HCT116 (cell line): ENCODE measurements at regions of chr2 and their contacts with region 1.

Region 1: GRCh38 chr2:32772638-32773447 is 145.0 kb downstream of the TTC27 start:
- DNase-seq: peak; percentile 21
- ATAC-seq: peak; percentile 78
- H3K4me3 ChIP-seq: no peak overlapping the region
- H3K27ac ChIP-seq: no peak overlapping the region
- H3K4me1 ChIP-seq: no peaks in the 10 kb centered on the region
- H3K27me3 ChIP-seq: no peaks in the 10 kb centered on the region
- CTCF ChIP-seq: peak; percentile 52 to 90 (median 85)
- POLR2A ChIP-seq: no peak
- RAD21 ChIP-seq: peak; percentile 93

Region 2: GRCh38 chr2:32931945-32932709 is 159.3 kb after region 1 on chr2:
- CTCF ChIA-PET with region 1: no interaction called
- POLR2A ChIA-PET with region 1: no interaction called
- RAD21 ChIA-PET with region 1: no interaction called
- intact Hi-C with region 1: loop called (anchors 5 kb)
- DNase-seq: no peak
- ATAC-seq: no peak
- H3K4me3 ChIP-seq: no peak overlapping the region
- H3K27ac ChIP-seq: no peak overlapping the region
- H3K4me1 ChIP-seq: no peaks in the 10 kb centered on the region
- H3K27me3 ChIP-seq: no peaks in the 10 kb centered on the region
- CTCF ChIP-seq: no peak
- POLR2A ChIP-seq: no peak
- RAD21 ChIP-seq: no peak

Region 3: GRCh38 chr2:33033606-33034081 is 260.8 kb after region 1 on chr2:
- CTCF ChIA-PET with region 1: interaction called, 6 read pairs
- POLR2A ChIA-PET with region 1: no interaction called
- RAD21 ChIA-PET with region 1: interaction called in 1 of 2 experiments, 3 read pairs
- intact Hi-C with region 1: loop called (anchors 1 kb)
- DNase-seq: peak; percentile 10
- ATAC-seq: peak; percentile 67
- H3K4me3 ChIP-seq: no peak overlapping the region
- H3K27ac ChIP-seq: no peak overlapping the region
- H3K4me1 ChIP-seq: no peaks in the 10 kb centered on the region
- H3K27me3 ChIP-seq: no peaks in the 10 kb centered on the region
- CTCF ChIP-seq: peak; percentile 52 to 98 (median 60)
- POLR2A ChIP-seq: no peak
- RAD21 ChIP-seq: peak; percentile 89

Region 4: DNA sequence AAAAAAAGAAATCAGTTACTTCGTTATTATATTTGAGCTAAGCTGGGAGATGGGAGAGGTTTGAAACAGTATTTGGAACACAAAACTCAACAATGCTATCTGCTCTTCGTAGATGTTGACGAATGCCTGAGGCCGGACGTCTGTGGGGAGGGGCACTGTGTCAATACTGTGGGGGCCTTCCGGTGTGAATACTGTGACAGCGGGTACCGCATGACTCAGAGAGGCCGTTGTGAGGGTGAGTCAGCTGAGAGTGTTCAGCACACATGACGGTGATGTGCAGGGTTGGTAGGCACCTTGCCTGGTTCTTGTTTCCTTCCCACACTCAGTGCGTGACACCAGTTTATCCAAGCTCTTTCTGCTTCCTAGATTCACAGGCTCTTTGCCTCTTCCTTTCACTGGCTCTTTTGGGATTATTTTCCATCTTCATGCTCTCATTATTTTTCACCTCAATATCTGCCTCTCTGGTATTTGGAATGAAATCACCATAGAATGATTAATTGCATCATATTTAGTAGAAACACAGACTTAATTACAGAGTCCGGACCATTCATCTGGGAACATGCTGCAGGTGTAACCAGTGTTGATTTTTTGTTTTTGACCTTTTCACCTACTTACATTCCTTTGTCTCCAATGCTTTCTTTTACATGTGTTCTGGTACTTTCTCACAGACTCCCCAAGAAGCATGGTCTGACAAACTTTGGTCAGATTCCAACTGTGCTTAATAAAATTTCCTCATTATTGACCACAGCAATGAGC is 503.0 kb after region 1 on chr2:
- CTCF ChIA-PET with region 1: no interaction called
- POLR2A ChIA-PET with region 1: no interaction called
- RAD21 ChIA-PET with region 1: no interaction called
- intact Hi-C with region 1: loop called (anchors 5 kb)
- DNase-seq: peak; percentile 6
- ATAC-seq: peak; percentile 76
- H3K4me3 ChIP-seq: no peak overlapping the region
- H3K27ac ChIP-seq: no peak overlapping the region
- H3K4me1 ChIP-seq: peaks cover 0 to 7% of the 10 kb centered on the region in 2 experiments; a peak in 2 of 4 replicates
- H3K27me3 ChIP-seq: no peaks in the 10 kb centered on the region
- CTCF ChIP-seq: no peak
- POLR2A ChIP-seq: no peak
- RAD21 ChIP-seq: no peak

Region 5: DNA sequence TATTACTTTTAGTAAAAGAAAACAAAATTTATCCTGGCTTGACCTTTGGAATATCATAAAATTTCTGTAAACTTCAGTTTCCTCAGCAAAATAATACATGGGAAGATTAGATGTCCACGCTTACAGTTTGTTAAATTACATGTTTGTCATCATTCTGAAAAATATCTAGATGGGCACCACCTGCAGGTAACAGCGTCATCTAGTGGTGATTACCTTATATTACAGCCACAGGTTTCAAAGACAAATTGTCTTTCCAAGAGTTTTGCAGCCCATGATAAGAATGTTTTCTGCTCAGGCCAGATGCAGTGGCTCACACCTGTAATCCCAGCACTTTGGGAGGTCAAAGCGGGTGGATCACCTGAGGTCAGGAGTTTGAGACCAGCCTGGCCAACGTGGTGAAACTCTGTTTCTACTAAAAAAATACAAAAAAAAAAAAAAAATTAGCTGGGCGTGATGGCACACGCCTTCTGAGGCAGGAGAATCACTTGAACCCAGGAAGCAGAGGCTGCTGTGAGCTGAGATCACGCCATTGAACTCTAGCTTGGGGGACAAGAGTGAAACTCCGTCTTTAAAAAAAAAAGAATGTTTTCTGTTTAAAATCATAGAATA is 607.3 kb after region 1 on chr2:
- CTCF ChIA-PET with region 1: interaction called, 16 read pairs
- POLR2A ChIA-PET with region 1: no interaction called
- RAD21 ChIA-PET with region 1: interaction called in 1 of 2 experiments, 4 read pairs
- intact Hi-C with region 1: no loop called
- DNase-seq: peak; percentile 18
- ATAC-seq: no peak
- H3K4me3 ChIP-seq: no peak overlapping the region
- H3K27ac ChIP-seq: no peak overlapping the region
- H3K4me1 ChIP-seq: no peaks in the 10 kb centered on the region
- H3K27me3 ChIP-seq: no peaks in the 10 kb centered on the region
- CTCF ChIP-seq: peak; percentile 54 to 90 (median 75); a peak in 5 of 6 replicates
- POLR2A ChIP-seq: no peak
- RAD21 ChIP-seq: peak; percentile 82

Region 6: GRCh38 chr2:33583194-33583938 is 810.5 kb after region 1 on chr2:
- CTCF ChIA-PET with region 1: no interaction called
- POLR2A ChIA-PET with region 1: no interaction called
- RAD21 ChIA-PET with region 1: no interaction called
- intact Hi-C with region 1: loop called (anchors 5 kb)
- DNase-seq: no peak
- ATAC-seq: peak; percentile 36; the same call in 1 of the 2 replicates
- H3K4me3 ChIP-seq: no peak overlapping the region
- H3K27ac ChIP-seq: no peak overlapping the region
- H3K4me1 ChIP-seq: no peaks in the 10 kb centered on the region
- H3K27me3 ChIP-seq: no peaks in the 10 kb centered on the region
- CTCF ChIP-seq: peak; percentile 71 to 79 (median 72); a peak in 5 of 6 replicates
- POLR2A ChIP-seq: no peak
- RAD21 ChIP-seq: peak; percentile 80